ENCODE measurements at regions of chr9 and their contacts with region 1.

Region 1: DNA sequence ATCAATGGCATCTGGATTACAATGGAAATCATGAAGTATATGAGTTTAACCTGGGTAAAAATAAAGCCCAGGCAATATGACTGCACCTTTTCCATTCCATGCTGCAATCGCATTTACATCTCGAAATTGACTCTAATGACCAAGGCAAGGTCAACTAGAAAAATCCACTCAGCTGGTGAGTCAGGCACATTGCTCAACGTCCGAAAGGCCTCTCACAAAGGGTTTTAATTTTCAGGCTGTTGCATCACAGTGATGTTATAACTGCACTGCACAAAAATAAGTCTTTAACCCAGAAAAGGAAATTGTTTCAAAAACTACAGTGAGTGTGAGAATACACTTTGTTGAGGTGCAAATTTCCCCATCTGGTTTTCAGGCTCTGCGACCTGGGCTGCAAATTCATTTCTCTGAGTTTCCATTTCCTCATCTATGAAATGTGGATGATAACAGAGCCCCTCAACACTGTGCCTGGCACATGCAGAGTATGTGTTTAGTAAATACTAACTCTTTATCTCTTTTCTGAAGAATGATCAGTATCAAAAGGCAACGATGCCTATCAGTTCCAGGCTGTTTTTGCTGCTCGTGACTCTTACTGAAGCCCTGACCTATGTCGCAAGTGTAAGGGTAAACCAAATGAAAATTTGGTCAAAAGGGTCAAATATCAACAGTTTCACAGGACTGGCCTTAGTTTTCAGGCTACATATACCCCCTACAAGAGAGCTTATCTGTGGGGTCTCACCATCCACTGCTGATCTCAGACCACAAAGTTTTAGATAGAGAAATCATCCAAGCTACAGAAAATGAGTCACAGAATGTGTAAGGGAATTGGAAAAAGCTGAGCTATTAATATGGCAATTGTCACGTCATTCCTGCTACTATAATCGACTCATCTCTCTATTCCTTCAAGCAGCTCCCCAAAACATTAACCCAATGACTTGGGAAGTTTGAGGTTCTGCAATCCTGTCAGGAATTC is 4.1 kb downstream of the NFIL3 start:
- DNase-seq: peak; percentile 53 to 66
- H3K4me3 ChIP-seq: peak overlapping the region in 2 of 4 donors; percentile 27 to 73
- H3K27ac ChIP-seq: peak overlapping the region in 4 of 5 donors; percentile 43 to 99 (median 96)
- H3K4me1 ChIP-seq: peaks cover 12 to 74% (median 47%) of the 10 kb centered on the region in 4 donors
- H3K27me3 ChIP-seq: peaks cover 0 to 5% (median 0%) of the 10 kb centered on the region in 3 donors
- CTCF ChIP-seq: no peak
- EP300 ChIP-seq: no peak
- POLR2A ChIP-seq: no peak

Region 2: GRCh38 chr9:91361291-91362050 is 58.0 kb before region 1 on chr9 and contains the start of gene AUH:
- intact Hi-C with region 1: loop called (anchors 10 kb)
- DNase-seq: peak; percentile 89 to 96
- H3K4me3 ChIP-seq: peak within 1 kb of the TSS; percentile 96 to 100 (median 98)
- H3K27ac ChIP-seq: peak within 1 kb of the TSS; percentile 92 to 98 (median 95)
- H3K4me1 ChIP-seq: peaks cover 20 to 52% (median 33%) of the 10 kb centered on the region in 4 donors
- H3K27me3 ChIP-seq: no peaks in the 10 kb centered on the region
- CTCF ChIP-seq: no peak
- EP300 ChIP-seq: no peak
- POLR2A ChIP-seq: no peak
- total RNA-seq, gene AUH: 5.8 to 331 (median 30.3) TPM